ENCODE measurements at regions of chrX and their contacts with region 1.

Region 1: GRCh38 chrX:109890895-109891502 is 111.9 kb upstream of the TMEM164 start:
- DNase-seq: peak; percentile 43
- ATAC-seq: peak; percentile 93
- H3K4me3 ChIP-seq: no peak overlapping the region
- H3K27ac ChIP-seq: no peak overlapping the region
- H3K4me1 ChIP-seq: no peaks in the 10 kb centered on the region
- H3K27me3 ChIP-seq: no peaks in the 10 kb centered on the region
- CTCF ChIP-seq: peak; percentile 52 to 76 (median 72); a peak in 5 of 6 replicates
- POLR2A ChIP-seq: no peak
- RAD21 ChIP-seq: peak; percentile 65

Region 2: DNA sequence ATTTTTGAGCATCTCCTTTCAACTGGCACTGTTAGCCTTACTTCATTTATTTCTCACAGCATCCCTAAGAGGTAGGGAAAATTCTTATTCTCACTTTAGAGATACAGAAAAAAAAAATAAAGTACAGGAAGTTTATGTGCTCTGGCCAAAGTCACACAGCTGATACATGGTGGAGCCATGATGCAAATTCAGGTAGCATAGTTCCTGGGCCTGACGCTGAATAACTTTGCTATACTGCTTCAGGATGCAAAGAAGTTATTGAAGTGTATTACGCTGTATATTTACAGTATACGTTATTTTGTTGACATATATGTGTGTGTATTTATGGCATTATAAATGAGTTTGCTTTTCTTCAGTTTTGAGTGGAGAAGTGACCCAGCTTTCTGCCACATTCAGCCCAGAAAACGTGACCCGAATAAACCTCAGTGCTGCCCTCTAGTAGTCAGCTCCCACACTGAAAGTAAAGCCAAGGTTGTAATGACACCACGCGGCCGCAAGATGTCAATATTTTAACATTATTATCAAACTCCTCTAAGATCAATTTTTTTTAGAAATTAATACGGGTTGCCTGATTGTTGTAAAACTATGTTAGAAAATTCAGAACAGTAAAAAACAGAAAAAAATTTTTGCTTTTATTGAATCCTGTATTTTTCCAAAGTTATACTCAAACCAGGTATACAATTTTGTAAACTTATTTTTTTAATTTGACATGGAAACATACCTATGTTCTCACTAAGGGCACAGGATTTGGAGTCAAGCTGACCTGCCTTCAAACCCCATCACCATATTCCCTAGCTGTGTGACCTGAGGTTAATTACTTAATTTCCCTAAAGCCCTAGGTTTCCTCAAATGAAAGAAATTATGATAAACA is 405.3 kb before region 1 on chrX:
- CTCF ChIA-PET with region 1: interaction called, 24 read pairs
- POLR2A ChIA-PET with region 1: no interaction called
- RAD21 ChIA-PET with region 1: interaction called, 3 to 6 read pairs
- intact Hi-C with region 1: loop called (anchors 2 kb)
- DNase-seq: peak; percentile 49
- ATAC-seq: peak; percentile 54; the same call in 1 of the 2 replicates
- H3K4me3 ChIP-seq: no peak overlapping the region
- H3K27ac ChIP-seq: no peak overlapping the region
- H3K4me1 ChIP-seq: no peaks in the 10 kb centered on the region
- H3K27me3 ChIP-seq: no peaks in the 10 kb centered on the region
- CTCF ChIP-seq: peak; percentile 73 to 99 (median 80)
- POLR2A ChIP-seq: no peak
- RAD21 ChIP-seq: peak; percentile 79

Region 3: DNA sequence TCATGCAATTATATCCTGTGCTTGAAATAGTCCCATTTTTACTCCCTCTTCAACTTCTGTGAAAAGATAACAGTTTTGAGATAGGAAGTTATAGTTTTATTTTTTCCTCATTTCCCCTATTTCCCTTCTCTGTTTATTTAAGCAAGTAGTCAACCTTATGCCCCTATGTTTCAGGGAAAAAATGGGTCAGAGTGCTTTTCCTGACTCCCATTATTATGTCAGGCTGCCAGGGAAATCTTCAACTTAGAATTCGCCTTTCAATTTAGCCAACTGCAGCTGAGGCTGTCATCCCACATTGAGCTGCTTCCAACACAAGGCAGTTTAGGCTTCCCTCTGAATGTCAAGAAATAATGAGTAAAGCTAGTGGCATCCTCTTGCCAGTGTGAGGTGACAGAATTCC is 312.1 kb before region 1 on chrX:
- CTCF ChIA-PET with region 1: no interaction called
- POLR2A ChIA-PET with region 1: no interaction called
- RAD21 ChIA-PET with region 1: no interaction called
- intact Hi-C with region 1: no loop called
- DNase-seq: no peak
- ATAC-seq: no peak
- H3K4me3 ChIP-seq: no peak overlapping the region
- H3K27ac ChIP-seq: no peak overlapping the region
- H3K4me1 ChIP-seq: no peaks in the 10 kb centered on the region
- H3K27me3 ChIP-seq: no peaks in the 10 kb centered on the region
- CTCF ChIP-seq: no peak
- POLR2A ChIP-seq: no peak
- RAD21 ChIP-seq: no peak

Region 4: GRCh38 chrX:109635176-109635575 is 255.8 kb before region 1 on chrX:
- CTCF ChIA-PET with region 1: interaction called, 9 read pairs
- POLR2A ChIA-PET with region 1: no interaction called
- RAD21 ChIA-PET with region 1: no interaction called
- intact Hi-C with region 1: loop called (anchors 10 kb)
- DNase-seq: no peak
- ATAC-seq: peak; percentile 57; the same call in 1 of the 2 replicates
- H3K4me3 ChIP-seq: no peak overlapping the region
- H3K27ac ChIP-seq: no peak overlapping the region
- H3K4me1 ChIP-seq: no peaks in the 10 kb centered on the region
- H3K27me3 ChIP-seq: no peaks in the 10 kb centered on the region
- CTCF ChIP-seq: peak in 2 of 3 experiments; percentile 44 to 58; a peak in 4 of 6 replicates
- POLR2A ChIP-seq: no peak
- RAD21 ChIP-seq: 0 out of 2 replicates have a peak, but pooled peaks have one; percentile 15

Region 5: GRCh38 chrX:109709129-109709631 is 181.8 kb before region 1 on chrX:
- CTCF ChIA-PET with region 1: interaction called, 32 read pairs
- POLR2A ChIA-PET with region 1: no interaction called
- RAD21 ChIA-PET with region 1: interaction called in 1 of 2 experiments, 5 read pairs
- intact Hi-C with region 1: loop called (anchors 1 kb)
- DNase-seq: peak; percentile 19
- ATAC-seq: peak; percentile 76
- H3K4me3 ChIP-seq: no peak overlapping the region
- H3K27ac ChIP-seq: peak overlapping the region; percentile 45; the same call in 1 of the 2 replicates
- H3K4me1 ChIP-seq: peaks cover 19 to 38% of the 10 kb centered on the region in 2 experiments
- H3K27me3 ChIP-seq: no peaks in the 10 kb centered on the region
- CTCF ChIP-seq: no peak
- POLR2A ChIP-seq: no peak
- RAD21 ChIP-seq: no peak

Region 6: DNA sequence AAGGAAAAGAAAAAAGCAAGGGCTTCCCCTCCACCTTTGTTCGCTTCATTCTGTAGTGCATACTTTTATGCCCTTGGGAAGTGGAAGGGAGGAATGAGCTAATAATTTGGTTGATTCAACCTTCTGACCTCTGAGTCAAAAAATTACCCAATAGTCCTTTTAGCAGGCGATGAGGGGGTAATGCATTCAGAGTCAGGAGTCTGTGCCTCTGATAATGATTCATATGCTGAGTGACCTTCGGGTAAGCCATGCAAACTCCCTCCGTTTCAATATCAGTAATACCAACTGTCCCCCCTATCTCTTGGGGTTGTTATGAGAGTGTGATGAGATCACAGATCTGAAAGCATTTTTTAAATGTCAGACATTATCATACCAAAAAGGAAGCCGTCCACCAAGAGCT is 116.3 kb before region 1 on chrX:
- CTCF ChIA-PET with region 1: no interaction called
- POLR2A ChIA-PET with region 1: no interaction called
- RAD21 ChIA-PET with region 1: no interaction called
- intact Hi-C with region 1: no loop called
- DNase-seq: no peak
- ATAC-seq: no peak
- H3K4me3 ChIP-seq: no peak overlapping the region
- H3K27ac ChIP-seq: no peak overlapping the region
- H3K4me1 ChIP-seq: no peaks in the 10 kb centered on the region
- H3K27me3 ChIP-seq: no peaks in the 10 kb centered on the region
- CTCF ChIP-seq: no peak
- POLR2A ChIP-seq: no peak
- RAD21 ChIP-seq: no peak

Region 7: GRCh38 chrX:109880629-109881028 is 10.4 kb before region 1 on chrX:
- CTCF ChIA-PET with region 1: interaction called, 22 read pairs
- POLR2A ChIA-PET with region 1: interaction called, 4 read pairs
- RAD21 ChIA-PET with region 1: no interaction called
- intact Hi-C with region 1: no loop called
- DNase-seq: no peak
- ATAC-seq: no peak
- H3K4me3 ChIP-seq: no peak overlapping the region
- H3K27ac ChIP-seq: no peak overlapping the region
- H3K4me1 ChIP-seq: no peaks in the 10 kb centered on the region
- H3K27me3 ChIP-seq: no peaks in the 10 kb centered on the region
- CTCF ChIP-seq: no peak
- POLR2A ChIP-seq: no peak
- RAD21 ChIP-seq: no peak

Region 8: DNA sequence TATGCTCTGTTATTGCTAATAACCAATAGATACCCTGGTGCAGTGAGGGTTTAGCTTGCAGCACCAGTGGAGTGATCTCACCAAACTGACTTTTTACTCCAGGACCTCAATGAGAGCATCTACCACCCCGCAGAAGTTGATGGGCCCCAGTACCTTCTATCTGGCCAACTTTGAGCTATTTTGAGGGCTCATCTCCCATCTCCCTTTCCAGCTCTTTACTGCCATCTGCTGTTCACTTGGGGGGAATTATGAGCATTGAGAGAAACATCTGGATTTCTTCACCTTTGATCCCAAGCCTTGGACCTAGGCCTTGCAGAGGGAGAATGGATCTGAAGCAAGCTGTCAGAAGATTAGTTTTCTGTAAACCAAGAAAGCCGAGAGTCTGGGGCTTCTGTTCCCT is 255.5 kb after region 1 on chrX:
- CTCF ChIA-PET with region 1: interaction called, 16 read pairs
- POLR2A ChIA-PET with region 1: no interaction called
- RAD21 ChIA-PET with region 1: no interaction called
- intact Hi-C with region 1: no loop called
- DNase-seq: peak; percentile 8
- ATAC-seq: peak; percentile 78
- H3K4me3 ChIP-seq: no peak overlapping the region
- H3K27ac ChIP-seq: no peak overlapping the region
- H3K4me1 ChIP-seq: no peaks in the 10 kb centered on the region
- H3K27me3 ChIP-seq: no peaks in the 10 kb centered on the region
- CTCF ChIP-seq: peak; percentile 51 to 60 (median 60); a peak in 5 of 6 replicates
- POLR2A ChIP-seq: no peak
- RAD21 ChIP-seq: peak; percentile 58

Region 9: GRCh38 chrX:110286136-110286535 is 395.1 kb after region 1 on chrX:
- CTCF ChIA-PET with region 1: no interaction called
- POLR2A ChIA-PET with region 1: no interaction called
- RAD21 ChIA-PET with region 1: no interaction called
- intact Hi-C with region 1: no loop called
- DNase-seq: peak; percentile 12
- ATAC-seq: no peak
- H3K4me3 ChIP-seq: no peak overlapping the region
- H3K27ac ChIP-seq: no peak overlapping the region
- H3K4me1 ChIP-seq: peaks cover 0 to 18% of the 10 kb centered on the region in 2 experiments; a peak in 2 of 4 replicates
- H3K27me3 ChIP-seq: no peaks in the 10 kb centered on the region
- CTCF ChIP-seq: no peak
- POLR2A ChIP-seq: no peak
- RAD21 ChIP-seq: no peak

Region 10: DNA sequence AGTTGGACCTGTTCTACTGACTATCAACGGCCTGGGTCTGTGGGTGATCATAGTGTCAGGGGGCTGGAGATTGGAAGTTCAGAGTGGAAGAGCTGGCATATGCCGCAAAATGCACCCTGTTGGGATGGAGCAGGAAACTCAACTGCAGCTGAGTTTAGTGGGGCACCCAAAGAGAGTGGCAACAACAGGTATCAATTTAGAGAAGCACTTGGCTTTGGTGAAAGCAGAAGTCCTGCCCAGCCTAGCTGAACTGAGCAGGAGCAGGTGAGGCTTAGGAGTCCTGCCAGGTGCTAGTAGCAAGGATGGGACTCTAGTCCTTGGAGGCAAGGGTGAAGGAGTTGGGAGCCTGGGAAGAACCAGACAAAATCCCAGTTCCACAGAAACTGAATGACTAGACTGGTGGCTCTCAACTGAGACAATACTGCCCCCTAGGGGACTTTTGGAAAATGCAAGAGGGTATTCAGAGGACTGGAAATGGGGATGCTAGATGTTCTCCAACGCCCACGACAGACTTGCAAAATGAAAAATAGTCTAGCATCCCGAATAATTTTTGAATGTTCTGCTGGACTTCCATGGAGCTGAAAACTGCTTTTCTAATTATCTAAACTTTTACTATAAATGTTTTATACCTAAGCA is 517.0 kb after region 1 on chrX:
- CTCF ChIA-PET with region 1: interaction called, 4 read pairs
- POLR2A ChIA-PET with region 1: no interaction called
- RAD21 ChIA-PET with region 1: no interaction called
- intact Hi-C with region 1: loop called (anchors 10 kb)
- DNase-seq: peak; percentile 39
- ATAC-seq: peak; percentile 76
- H3K4me3 ChIP-seq: no peak overlapping the region
- H3K27ac ChIP-seq: no peak overlapping the region
- H3K4me1 ChIP-seq: peaks cover 5 to 11% of the 10 kb centered on the region in 2 experiments; a peak in 3 of 4 replicates
- H3K27me3 ChIP-seq: no peaks in the 10 kb centered on the region
- CTCF ChIP-seq: peak; percentile 53 to 64 (median 60); a peak in 5 of 6 replicates
- POLR2A ChIP-seq: no peak
- RAD21 ChIP-seq: peak; percentile 79

Measured in HCT116 (cell line).